HCT116 (cell line): ENCODE measurements at regions of chr12 and their contacts with region 1.

Region 1: DNA sequence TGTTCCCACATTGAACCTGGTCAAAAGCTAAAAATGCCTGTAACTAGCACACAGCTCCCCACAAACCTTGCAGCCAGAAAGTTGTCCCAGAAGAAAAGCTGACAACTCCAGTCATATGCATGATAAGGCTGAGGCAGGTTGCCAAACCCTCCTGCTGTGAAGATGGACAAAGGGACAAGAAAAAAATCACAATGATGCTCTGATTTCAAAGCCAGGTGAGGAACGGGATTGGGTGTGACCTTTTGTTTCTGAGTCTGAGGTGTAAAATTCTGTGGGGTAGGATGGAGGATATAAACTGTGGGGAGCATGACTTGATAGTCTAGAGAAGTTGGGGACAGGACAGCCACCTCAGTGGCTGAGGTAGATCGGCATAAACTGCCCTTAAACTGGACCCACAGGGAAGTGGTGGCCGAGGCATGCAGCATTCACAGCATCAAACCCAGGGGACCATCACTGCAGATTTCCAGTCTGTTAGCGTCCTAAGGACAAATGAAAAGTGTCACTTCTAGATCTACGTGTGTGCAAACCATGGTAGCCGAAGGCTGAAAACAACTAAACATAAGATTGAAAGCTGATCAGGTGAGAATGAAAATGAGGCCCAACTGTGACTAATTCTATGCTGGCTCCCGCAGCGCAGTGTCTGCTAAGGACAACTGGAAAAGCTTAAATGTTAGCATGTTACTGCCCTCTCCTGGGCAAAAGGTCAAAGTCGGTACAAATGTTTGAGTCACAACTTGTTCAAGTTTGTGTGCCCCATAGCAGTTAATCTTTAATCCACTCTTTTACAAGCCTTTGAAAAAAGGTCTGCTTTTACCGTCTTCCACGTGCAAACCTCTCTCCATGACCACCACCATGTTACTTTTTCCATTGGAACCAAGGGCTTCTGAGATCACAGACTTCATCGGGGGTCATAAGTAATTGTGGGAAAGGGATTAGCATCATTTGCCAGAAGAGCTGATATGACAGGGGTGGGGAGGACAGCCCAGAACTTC is 39.8 kb downstream of the GRIN2B start:
- DNase-seq: peak; percentile 77
- ATAC-seq: peak; percentile 96
- H3K4me3 ChIP-seq: peak overlapping the region in 1 of 2 experiments; percentile 26; a peak in 1 of 4 replicates
- H3K27ac ChIP-seq: peak overlapping the region; percentile 67
- H3K4me1 ChIP-seq: peaks cover 22 to 23% of the 10 kb centered on the region in 2 experiments
- H3K27me3 ChIP-seq: no peaks in the 10 kb centered on the region
- CTCF ChIP-seq: peak; percentile 49 to 65 (median 61); a peak in 5 of 6 replicates
- POLR2A ChIP-seq: no peak
- RAD21 ChIP-seq: peak; percentile 88

Region 2: DNA sequence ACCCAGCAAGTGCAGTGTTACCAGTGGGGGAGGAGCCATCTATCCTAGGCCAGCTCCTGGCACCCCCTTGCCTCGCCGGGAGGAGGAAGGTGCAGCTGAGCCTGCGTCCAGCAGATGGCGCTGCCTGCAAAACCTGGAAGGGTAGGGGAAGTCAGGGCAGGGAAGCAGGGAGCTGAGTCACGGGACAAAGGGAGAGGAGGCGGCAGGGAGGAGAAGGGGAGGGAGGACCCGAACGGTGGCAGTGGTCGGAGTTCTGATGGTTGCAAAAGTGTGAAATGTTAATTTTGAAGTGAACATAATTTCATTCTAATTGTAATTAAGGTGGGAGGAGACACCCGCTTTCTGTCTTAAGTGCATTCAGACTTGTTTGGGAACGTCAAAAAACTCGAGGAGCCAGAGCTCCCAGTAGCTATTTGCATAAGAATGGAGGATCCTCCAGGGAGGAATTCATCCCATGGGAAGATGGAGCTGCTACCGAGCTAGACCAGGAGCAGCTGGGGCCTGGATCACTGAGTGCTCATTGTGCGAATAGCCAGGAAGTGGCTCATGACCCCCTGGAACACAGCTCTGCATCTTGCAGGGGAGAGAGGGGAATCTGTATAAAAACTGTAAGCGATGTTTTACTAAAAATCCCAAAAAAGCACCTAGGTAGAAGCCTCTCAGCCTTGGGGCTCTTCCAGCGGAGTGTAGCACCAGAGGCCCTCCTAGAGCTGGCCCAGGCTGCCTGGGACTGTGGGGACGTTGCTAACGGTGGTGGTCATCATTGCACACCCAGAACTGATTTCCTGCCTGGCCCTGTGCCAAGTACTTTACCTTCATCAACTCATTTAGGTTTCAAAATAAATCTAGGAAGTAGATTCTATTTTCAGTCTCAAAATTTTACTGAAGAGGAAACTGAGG is 685.5 kb before region 1 on chr12:
- CTCF ChIA-PET with region 1: interaction called, 26 read pairs
- POLR2A ChIA-PET with region 1: no interaction called
- RAD21 ChIA-PET with region 1: interaction called, 3 to 8 read pairs
- intact Hi-C with region 1: loop called (anchors 2 kb)
- DNase-seq: peak; percentile 89
- ATAC-seq: peak; percentile 100
- H3K4me3 ChIP-seq: peak overlapping the region in 1 of 2 experiments; percentile 13; a peak in 1 of 4 replicates
- H3K27ac ChIP-seq: no peak overlapping the region
- H3K4me1 ChIP-seq: peaks cover 0 to 15% of the 10 kb centered on the region in 2 experiments; a peak in 2 of 4 replicates
- H3K27me3 ChIP-seq: no peaks in the 10 kb centered on the region
- CTCF ChIP-seq: peak; percentile 91 to 98 (median 97)
- POLR2A ChIP-seq: no peak
- RAD21 ChIP-seq: peak; percentile 98

Region 3: DNA sequence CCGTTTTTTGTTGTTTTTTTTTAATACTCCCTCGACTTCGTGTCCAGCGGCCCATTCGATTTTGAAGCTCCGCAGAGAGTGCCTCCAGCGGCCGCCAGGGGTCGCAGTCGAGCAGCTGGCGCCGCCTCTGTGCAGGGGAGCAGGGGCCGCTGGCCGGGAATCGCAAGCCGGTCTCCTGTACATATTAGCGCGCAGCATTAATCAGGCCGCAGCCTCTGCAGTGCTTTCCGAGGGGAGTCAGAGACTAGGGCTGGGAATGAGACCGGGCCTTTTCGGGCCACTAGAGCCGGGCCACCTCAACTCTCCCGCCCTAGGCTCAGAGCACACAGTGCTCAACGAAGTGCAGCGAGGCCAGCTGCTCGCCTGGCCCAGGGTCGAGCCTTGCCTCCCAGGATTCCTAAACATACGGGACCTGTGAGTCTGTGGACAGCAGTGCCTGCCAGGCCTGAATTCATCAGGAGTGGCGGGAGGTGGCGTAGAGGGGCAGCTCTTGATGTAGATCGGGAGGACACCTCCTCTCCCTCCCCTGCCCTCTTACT is 663.2 kb before region 1 on chr12:
- CTCF ChIA-PET with region 1: interaction called, 12 read pairs
- POLR2A ChIA-PET with region 1: no interaction called
- RAD21 ChIA-PET with region 1: interaction called in 1 of 2 experiments, 4 read pairs
- intact Hi-C with region 1: loop called (anchors 1 kb)
- DNase-seq: peak; percentile 34
- ATAC-seq: peak; percentile 99
- H3K4me3 ChIP-seq: no peak overlapping the region
- H3K27ac ChIP-seq: peak overlapping the region; percentile 40; the same call in 1 of the 2 replicates
- H3K4me1 ChIP-seq: peaks cover 3 to 13% of the 10 kb centered on the region in 2 experiments; a peak in 3 of 4 replicates
- H3K27me3 ChIP-seq: no peaks in the 10 kb centered on the region
- CTCF ChIP-seq: peak; percentile 83 to 98 (median 96)
- POLR2A ChIP-seq: no peak
- RAD21 ChIP-seq: peak; percentile 94

Region 4: DNA sequence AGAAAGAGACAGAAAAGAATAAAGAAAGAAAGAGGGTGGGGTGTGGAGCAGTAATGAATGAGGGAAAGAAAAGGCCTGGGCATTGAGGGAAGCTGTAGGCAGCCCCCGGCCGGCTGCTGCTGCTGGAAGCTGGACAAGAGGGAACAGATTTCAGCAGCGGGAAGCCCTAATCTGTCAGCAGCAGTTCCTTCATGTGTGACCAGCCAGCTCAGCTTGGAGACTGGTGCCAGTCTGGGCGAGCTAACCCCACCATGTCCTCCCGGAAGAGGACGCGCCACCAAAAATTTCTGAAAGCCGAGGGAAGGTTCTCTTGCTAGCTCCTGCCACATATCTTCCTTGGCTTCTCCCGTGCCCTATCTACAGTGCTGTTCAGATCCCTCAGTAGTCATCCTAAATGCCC is 197.0 kb before region 1 on chr12:
- CTCF ChIA-PET with region 1: interaction called, 9 read pairs
- POLR2A ChIA-PET with region 1: no interaction called
- RAD21 ChIA-PET with region 1: no interaction called
- intact Hi-C with region 1: loop called (anchors 2 kb)
- DNase-seq: no peak
- ATAC-seq: no peak
- H3K4me3 ChIP-seq: no peak overlapping the region
- H3K27ac ChIP-seq: no peak overlapping the region
- H3K4me1 ChIP-seq: peaks cover 13 to 18% of the 10 kb centered on the region in 2 experiments; a peak in 3 of 4 replicates
- H3K27me3 ChIP-seq: no peaks in the 10 kb centered on the region
- CTCF ChIP-seq: no peak
- POLR2A ChIP-seq: no peak
- RAD21 ChIP-seq: no peak

Region 5: GRCh38 chr12:13864081-13864673 is 77.4 kb before region 1 on chr12:
- CTCF ChIA-PET with region 1: interaction called, 15 read pairs
- POLR2A ChIA-PET with region 1: no interaction called
- RAD21 ChIA-PET with region 1: interaction called in 1 of 2 experiments, 3 read pairs
- intact Hi-C with region 1: loop called (anchors 2 kb)
- DNase-seq: peak; percentile 54
- ATAC-seq: peak; percentile 98
- H3K4me3 ChIP-seq: no peak overlapping the region
- H3K27ac ChIP-seq: no peak overlapping the region
- H3K4me1 ChIP-seq: no peaks in the 10 kb centered on the region
- H3K27me3 ChIP-seq: no peaks in the 10 kb centered on the region
- CTCF ChIP-seq: peak; percentile 68 to 94 (median 93); a peak in 5 of 6 replicates
- POLR2A ChIP-seq: no peak
- RAD21 ChIP-seq: peak; percentile 66

Region 6: DNA sequence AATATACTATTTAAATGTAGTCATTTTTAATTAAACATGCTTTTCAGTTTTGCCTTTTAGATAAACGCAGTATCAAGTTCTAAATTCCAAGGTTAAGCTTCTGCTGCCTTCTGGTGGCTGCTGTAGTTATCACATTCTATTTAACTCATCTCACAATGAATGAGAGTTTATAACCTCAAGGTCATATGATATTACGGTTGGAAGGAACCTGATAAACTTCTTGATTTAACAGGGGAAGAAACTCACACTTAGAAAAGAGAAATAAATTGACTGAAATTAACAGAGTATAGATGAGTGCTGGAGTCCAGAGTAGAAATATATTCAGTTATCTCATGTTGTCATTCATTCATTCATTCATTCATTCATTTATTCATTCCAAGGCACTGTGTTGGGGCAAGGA is 723.0 kb after region 1 on chr12:
- CTCF ChIA-PET with region 1: no interaction called
- POLR2A ChIA-PET with region 1: no interaction called
- RAD21 ChIA-PET with region 1: no interaction called
- intact Hi-C with region 1: no loop called
- DNase-seq: peak; percentile 37
- ATAC-seq: peak; percentile 75
- H3K4me3 ChIP-seq: no peak overlapping the region
- H3K27ac ChIP-seq: no peak overlapping the region
- H3K4me1 ChIP-seq: no peaks in the 10 kb centered on the region
- H3K27me3 ChIP-seq: no peaks in the 10 kb centered on the region
- CTCF ChIP-seq: peak; percentile 42 to 78 (median 68); a peak in 5 of 6 replicates
- POLR2A ChIP-seq: no peak
- RAD21 ChIP-seq: peak; percentile 84